H1 (cell line): ENCODE measurements at regions of chr2 and their contacts with region 1.

Region 1: GRCh38 chr2:234288974-234289455 is 207.9 kb downstream of the ARL4C start:
- DNase-seq: peak; percentile 41 to 95
- H3K4me3 ChIP-seq: no peak overlapping the region
- H3K27ac ChIP-seq: no peak overlapping the region
- H3K4me1 ChIP-seq: peaks cover 0 to 2% (median under 1%) of the 10 kb centered on the region in 4 experiments; a peak in 5 of 7 replicates
- H3K27me3 ChIP-seq: no peaks in the 10 kb centered on the region
- CTCF ChIP-seq: peak; percentile 90 to 97 (median 93)
- EP300 ChIP-seq: no peak; a peak in 1 of 3 replicates
- POLR2A ChIP-seq: no peak
- RAD21 ChIP-seq: peak; percentile 92 to 95

Region 2: GRCh38 chr2:234300932-234301823 is 12.2 kb after region 1 on chr2:
- CTCF ChIA-PET with region 1: interaction called, 14 read pairs
- POLR2A ChIA-PET with region 1: no interaction called
- DNase-seq: no peak
- H3K4me3 ChIP-seq: no peak overlapping the region
- H3K27ac ChIP-seq: no peak overlapping the region
- H3K4me1 ChIP-seq: peaks cover 0 to 10% (median 7%) of the 10 kb centered on the region in 4 experiments; a peak in 3 of 7 replicates
- H3K27me3 ChIP-seq: no peaks in the 10 kb centered on the region
- CTCF ChIP-seq: no peak
- EP300 ChIP-seq: no peak
- POLR2A ChIP-seq: no peak
- RAD21 ChIP-seq: no peak

Region 3: DNA sequence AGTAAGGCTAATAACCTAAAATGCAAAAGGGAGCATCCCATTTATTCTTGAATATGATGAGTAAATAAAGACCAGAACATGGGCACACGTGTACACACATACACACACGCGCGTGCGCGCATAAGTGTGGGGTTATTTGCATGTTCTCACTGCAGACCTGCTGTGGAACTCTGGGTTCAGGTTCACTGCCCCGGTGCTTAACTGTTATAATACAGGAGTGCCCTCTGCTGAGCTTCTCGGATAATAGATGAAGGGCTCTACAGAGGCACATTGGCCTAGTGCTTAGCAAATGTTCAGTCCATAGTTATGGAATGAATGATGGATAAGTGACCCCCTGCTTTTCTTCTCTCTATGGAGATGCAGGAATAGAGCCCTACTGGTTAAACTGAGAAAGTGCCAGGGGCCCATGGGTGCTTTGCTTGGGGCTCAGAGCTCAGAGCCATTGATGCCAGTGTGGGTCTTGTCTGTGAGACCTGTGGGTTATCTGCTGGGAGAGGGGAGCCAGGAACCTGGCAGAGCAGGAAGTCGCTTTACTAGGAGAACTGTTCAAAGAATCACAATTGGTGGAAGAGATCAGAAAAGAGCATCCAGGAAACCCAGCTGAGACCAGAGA is 211.5 kb after region 1 on chr2:
- CTCF ChIA-PET with region 1: interaction called, 42 read pairs
- POLR2A ChIA-PET with region 1: no interaction called
- DNase-seq: peak in 1 of 2 experiments; percentile 57
- H3K4me3 ChIP-seq: no peak overlapping the region
- H3K27ac ChIP-seq: no peak overlapping the region
- H3K4me1 ChIP-seq: peaks cover 4 to 16% (median 10%) of the 10 kb centered on the region in 4 experiments
- H3K27me3 ChIP-seq: peaks cover 0 to 11% (median 3%) of the 10 kb centered on the region in 4 experiments; a peak in 4 of 7 replicates
- CTCF ChIP-seq: peak; percentile 11 to 79 (median 64)
- EP300 ChIP-seq: no peak
- POLR2A ChIP-seq: no peak
- RAD21 ChIP-seq: peak; percentile 91 to 97